PC-9 (cell line): ENCODE measurements at regions of chr7 and their contacts with region 1.

Region 1: DNA sequence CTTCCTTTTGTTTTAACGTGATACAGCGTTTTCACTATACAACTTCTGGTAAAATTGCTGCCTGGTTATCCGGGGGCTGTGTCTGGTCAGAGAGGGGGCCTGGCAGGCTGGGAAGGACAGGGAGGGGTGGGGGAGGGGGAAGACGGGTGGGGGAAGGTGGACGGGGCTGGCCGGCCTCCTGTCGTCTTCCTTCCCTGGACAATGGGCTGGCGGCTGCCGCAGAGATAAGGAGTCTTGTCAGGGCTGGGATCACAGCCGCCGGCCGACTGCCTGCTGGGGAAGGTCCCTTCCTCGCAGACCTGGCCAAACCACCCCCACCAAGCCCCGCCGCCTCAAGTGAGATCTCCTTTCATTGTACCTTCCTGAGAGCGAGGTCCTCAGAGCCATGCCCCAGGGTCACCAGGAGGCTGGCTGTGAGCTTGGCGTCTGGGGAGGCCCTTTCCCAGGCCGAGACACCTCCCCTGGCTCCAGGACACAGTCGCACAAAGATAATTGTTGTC is 151.2 kb upstream of the TNRC18 start:
- DNase-seq: peak in 1 of 2 experiments; percentile 65
- H3K4me3 ChIP-seq: peak overlapping the region; percentile 41; the same call in 1 of the 2 replicates
- H3K27ac ChIP-seq: peak overlapping the region; percentile 75
- H3K4me1 ChIP-seq: peaks cover 34% of the 10 kb centered on the region
- H3K27me3 ChIP-seq: no peaks in the 10 kb centered on the region
- CTCF ChIP-seq: no peak

Region 2: DNA sequence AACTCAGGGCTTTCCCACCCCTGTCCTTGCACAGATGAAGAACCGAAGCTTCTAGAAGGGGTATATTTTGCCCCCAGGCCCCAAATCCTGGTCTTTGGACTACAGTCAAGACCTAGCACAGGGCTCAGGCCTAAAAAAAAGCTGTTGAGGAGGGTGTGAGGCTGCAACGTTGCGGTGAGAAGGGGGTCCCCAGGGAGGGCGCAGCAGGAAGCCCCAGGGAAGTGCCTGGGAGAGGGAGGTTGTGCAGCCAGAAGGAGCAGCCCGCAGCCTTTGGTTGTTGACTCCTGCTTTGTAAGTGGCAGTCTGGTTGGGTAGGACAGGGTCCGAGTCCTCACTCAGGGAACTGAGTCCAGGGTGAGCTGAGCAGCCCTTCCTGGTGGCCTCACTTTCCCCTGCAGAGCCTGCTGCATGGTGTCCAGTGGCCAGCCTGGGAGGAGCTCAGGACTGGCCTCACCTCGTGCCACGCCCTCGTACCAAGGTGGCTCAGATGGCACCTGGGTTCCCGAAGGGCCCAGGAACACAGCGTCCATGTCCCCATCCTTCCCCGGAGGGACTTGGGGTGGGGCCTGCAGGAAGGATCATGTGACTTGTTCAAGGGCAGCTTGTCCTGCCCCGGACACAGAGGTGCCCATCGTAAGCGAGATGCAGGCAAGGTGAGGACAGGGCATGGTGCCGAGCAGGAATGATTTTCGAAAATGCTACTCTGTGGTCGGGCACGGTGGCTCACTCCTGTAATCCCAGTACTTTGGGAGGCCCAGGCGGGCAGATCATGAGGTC is 15.2 kb after region 1 on chr7:
- CTCF ChIA-PET with region 1: interaction called, 16 read pairs
- POLR2A ChIA-PET with region 1: interaction called, 14 read pairs
- intact Hi-C with region 1: loop called (anchors 1 kb)
- DNase-seq: no peak
- H3K4me3 ChIP-seq: no peak overlapping the region
- H3K27ac ChIP-seq: no peak overlapping the region
- H3K4me1 ChIP-seq: peaks cover 34% of the 10 kb centered on the region
- H3K27me3 ChIP-seq: no peaks in the 10 kb centered on the region
- CTCF ChIP-seq: no peak

Region 3: DNA sequence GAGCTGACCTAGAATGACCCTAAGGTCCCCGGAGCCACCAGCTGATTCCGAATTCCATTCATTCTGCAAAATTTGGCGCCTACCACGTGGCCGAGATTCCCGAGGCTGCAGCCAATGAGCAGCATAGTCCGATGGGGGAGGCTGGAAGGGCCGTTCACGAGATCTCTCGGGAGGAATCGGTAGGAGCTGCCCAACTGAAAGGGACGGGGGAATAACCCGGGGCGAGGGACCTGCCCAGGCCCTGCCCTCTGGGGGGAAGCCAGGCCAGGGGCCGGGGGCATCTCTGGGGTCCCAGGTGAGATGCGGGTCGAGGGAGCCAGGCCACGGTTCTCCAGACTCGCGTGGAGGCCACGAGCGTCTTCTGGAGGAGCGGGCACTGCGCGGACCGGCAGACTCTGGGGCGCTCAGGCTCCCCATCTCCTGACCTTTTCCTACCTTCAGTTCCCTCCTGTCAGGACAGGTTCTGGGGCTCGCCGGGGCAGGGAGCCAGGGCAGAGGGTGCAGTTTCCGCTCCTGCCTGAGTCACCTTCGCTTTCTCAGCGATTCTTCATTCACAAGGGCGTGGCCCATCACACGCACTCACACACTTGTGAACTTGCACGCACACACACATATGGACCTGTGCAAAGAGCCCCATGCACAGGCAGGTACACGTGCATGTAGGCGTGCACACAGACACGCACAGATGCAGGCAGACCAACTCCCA is 33.3 kb after region 1 on chr7:
- CTCF ChIA-PET with region 1: no interaction called
- POLR2A ChIA-PET with region 1: interaction called, 60 read pairs
- intact Hi-C with region 1: no loop called
- DNase-seq: no peak
- H3K4me3 ChIP-seq: no peak overlapping the region
- H3K27ac ChIP-seq: no peak overlapping the region
- H3K4me1 ChIP-seq: no peaks in the 10 kb centered on the region
- H3K27me3 ChIP-seq: no peaks in the 10 kb centered on the region
- CTCF ChIP-seq: no peak

Region 4: GRCh38 chr7:5679813-5680473 is 105.1 kb after region 1 on chr7:
- CTCF ChIA-PET with region 1: no interaction called
- POLR2A ChIA-PET with region 1: no interaction called
- intact Hi-C with region 1: no loop called
- DNase-seq: no peak
- H3K4me3 ChIP-seq: no peak overlapping the region
- H3K27ac ChIP-seq: no peak overlapping the region
- H3K4me1 ChIP-seq: no peaks in the 10 kb centered on the region
- H3K27me3 ChIP-seq: no peaks in the 10 kb centered on the region
- CTCF ChIP-seq: no peak